Heart right ventricle (tissue), 16 donors: ENCODE measurements at regions of chr4 and their contacts with region 1.

Region 1: GRCh38 chr4:153791746-153792617 is 3.1 kb upstream of the SFRP2 start:
- DNase-seq: peak in 1 of 2 donors; percentile 26
- ATAC-seq: peak in 3 of 8 donors; percentile 37 to 65 (median 55)
- H3K4me3 ChIP-seq: peak overlapping the region in 9 of 10 donors; percentile 1 to 34 (median 29)
- H3K27ac ChIP-seq: no peak overlapping the region
- H3K4me1 ChIP-seq: peaks cover 4 to 44% (median 32%) of the 10 kb centered on the region in 9 donors
- H3K27me3 ChIP-seq: peaks cover 39 to 99% (median 88%) of the 10 kb centered on the region in 7 donors
- CTCF ChIP-seq: peak in 6 of 9 donors; percentile 15 to 45 (median 28)

Region 2: GRCh38 chr4:153873741-153874140 is 81.8 kb after region 1 on chr4:
- intact Hi-C with region 1: no loop called
- DNase-seq: no peak
- ATAC-seq: no peak
- H3K4me3 ChIP-seq: no peak overlapping the region
- H3K27ac ChIP-seq: no peak overlapping the region
- H3K4me1 ChIP-seq: no peaks in the 10 kb centered on the region
- H3K27me3 ChIP-seq: peaks cover 0 to 3% (median 0%) of the 10 kb centered on the region in 7 donors
- CTCF ChIP-seq: no peak

Region 3: GRCh38 chr4:154018659-154019058 is 226.7 kb after region 1 on chr4:
- intact Hi-C with region 1: loop called in 3 of 10 experiments (anchors 5 to 10 kb)
- DNase-seq: no peak
- ATAC-seq: no peak
- H3K4me3 ChIP-seq: no peak overlapping the region
- H3K27ac ChIP-seq: no peak overlapping the region
- H3K4me1 ChIP-seq: no peaks in the 10 kb centered on the region
- H3K27me3 ChIP-seq: peaks cover 0 to 7% (median 0%) of the 10 kb centered on the region in 7 donors
- CTCF ChIP-seq: peak in 2 of 9 donors; percentile 8 to 17

Region 4: GRCh38 chr4:154024097-154024694 is 232.2 kb after region 1 on chr4:
- intact Hi-C with region 1: loop called in 3 of 10 experiments (anchors 5 to 10 kb)
- DNase-seq: no peak
- ATAC-seq: no peak
- H3K4me3 ChIP-seq: no peak overlapping the region
- H3K27ac ChIP-seq: no peak overlapping the region
- H3K4me1 ChIP-seq: no peaks in the 10 kb centered on the region
- H3K27me3 ChIP-seq: peaks cover 0 to 8% (median 0%) of the 10 kb centered on the region in 7 donors
- CTCF ChIP-seq: peak in 3 of 9 donors; percentile 12 to 37 (median 26)